Activated naive CD4-positive, alpha-beta T cell treated with anti-CD3 and anti-CD28 coated beads, Interleukin-2, amount 10 ng/mL, durations not matched to agents 7 days and 5 days (primary cell): ENCODE measurements at regions of chr9 and their contacts with region 1.

Region 1: DNA sequence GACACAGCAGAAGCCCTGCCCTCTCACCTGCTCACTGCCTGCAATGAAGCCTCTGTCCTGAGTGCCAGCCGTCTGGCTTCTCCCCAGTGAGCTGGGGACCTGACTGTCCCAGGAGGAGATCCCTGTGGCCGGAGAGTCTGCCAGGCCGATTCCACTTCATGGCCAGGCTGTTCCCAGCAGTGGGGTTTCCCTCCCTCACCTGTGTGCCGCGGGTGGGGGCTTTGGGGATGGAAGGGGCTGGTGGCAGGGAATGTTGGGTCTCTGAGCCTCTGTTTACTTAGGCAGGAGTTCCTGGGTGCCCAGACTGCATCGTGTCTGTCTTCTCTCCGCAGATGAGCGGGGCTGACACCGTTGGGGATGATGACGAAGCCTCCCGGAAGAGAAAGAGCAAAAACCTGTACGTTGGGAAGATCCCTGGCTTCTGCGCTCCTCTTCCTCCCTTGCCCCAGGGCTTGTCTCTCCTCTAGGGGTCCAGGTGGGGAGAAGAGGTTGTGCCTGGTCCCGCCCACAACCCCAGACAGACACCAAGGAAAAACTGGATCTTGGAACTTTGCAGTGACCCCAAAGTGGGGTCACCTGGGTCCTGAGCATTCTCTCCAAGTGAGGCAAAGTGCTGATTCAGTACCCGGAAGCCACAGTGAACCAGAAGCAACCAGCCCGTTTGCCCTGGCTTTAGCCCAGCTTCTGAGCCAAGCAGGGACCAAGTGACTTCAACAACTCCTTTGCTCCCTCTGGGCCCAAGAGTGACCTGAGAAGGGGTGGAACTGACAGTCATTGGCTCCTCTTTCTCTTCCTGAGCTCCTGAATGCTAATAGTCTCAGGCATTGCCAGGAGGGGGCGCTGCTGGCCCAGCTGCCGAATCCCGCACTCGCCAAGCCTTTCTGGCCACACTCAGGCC is 127.7 kb downstream of the RGS3 start:
- DNase-seq: peak; percentile 68
- H3K4me3 Mint-ChIP-seq: no peak overlapping the region
- H3K27ac Mint-ChIP-seq: no peak overlapping the region
- H3K4me1 Mint-ChIP-seq: peaks cover 50% of the 10 kb centered on the region
- H3K27me3 Mint-ChIP-seq: no peaks in the 10 kb centered on the region

Region 2: GRCh38 chr9:113446323-113446740 is 144.9 kb before region 1 on chr9:
- CTCF ChIA-PET with region 1: interaction called, 162 read pairs
- DNase-seq: peak; percentile 27
- H3K4me3 Mint-ChIP-seq: no peak overlapping the region
- H3K27ac Mint-ChIP-seq: no peak overlapping the region
- H3K4me1 Mint-ChIP-seq: peaks cover 3% of the 10 kb centered on the region
- H3K27me3 Mint-ChIP-seq: no peaks in the 10 kb centered on the region

Region 3: DNA sequence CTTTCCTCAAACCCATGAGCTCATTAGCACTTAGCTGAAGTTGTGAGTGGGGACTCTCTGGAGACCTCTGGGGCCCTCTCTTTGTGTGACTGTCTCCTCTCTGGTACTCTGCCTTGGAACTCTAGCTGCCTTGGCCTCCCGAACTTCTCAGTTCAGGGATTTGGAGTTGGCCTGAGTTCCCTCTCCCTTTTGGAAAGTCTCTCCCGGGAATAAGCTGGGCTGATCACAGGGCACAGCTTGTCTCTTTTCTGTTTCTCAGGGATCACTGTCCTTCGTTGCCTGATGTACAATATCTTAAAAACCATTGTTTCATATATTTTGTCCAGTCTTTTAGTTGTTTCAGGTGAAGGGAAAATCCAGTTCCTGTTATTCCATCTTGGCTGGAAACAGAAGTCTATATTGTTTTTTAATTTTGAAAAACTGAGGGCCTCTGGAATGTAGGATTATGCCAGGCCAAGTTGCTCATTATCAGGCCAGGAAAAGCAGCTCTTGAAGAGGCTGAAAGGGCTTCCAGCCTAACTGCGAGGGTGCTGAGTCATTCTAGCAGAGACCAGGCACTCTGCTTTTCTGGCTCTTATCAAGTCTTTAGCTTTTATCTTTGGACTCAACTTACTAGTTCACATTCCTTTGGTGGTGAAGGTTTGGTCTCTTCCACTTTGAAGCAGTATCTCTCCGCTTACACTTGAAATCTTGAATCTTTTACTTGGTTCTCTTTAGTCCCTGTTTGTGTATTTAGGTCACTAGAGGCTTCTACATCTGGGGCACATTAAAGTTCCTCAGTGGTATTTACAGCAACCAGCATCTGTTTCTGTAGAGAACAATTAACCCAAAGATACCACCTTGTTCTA is 136.1 kb before region 1 on chr9:
- CTCF ChIA-PET with region 1: interaction called, 162 read pairs
- DNase-seq: no peak
- H3K4me3 Mint-ChIP-seq: no peak overlapping the region
- H3K27ac Mint-ChIP-seq: no peak overlapping the region
- H3K4me1 Mint-ChIP-seq: peaks cover 8% of the 10 kb centered on the region
- H3K27me3 Mint-ChIP-seq: no peaks in the 10 kb centered on the region

Region 4: GRCh38 chr9:113602126-113603044 is 11.1 kb after region 1 on chr9:
- CTCF ChIA-PET with region 1: interaction called, 71 read pairs
- DNase-seq: peak; percentile 33
- H3K4me3 Mint-ChIP-seq: no peak overlapping the region
- H3K27ac Mint-ChIP-seq: no peak overlapping the region
- H3K4me1 Mint-ChIP-seq: no peaks in the 10 kb centered on the region
- H3K27me3 Mint-ChIP-seq: no peaks in the 10 kb centered on the region

Region 5: GRCh38 chr9:113622600-113623400 is 31.6 kb after region 1 on chr9:
- CTCF ChIA-PET with region 1: interaction called, 15 read pairs
- DNase-seq: no peak
- H3K4me3 Mint-ChIP-seq: no peak overlapping the region
- H3K27ac Mint-ChIP-seq: no peak overlapping the region
- H3K4me1 Mint-ChIP-seq: peaks cover 3% of the 10 kb centered on the region
- H3K27me3 Mint-ChIP-seq: peaks cover 20% of the 10 kb centered on the region

Region 6: GRCh38 chr9:113772121-113772810 is 181.0 kb after region 1 on chr9:
- CTCF ChIA-PET with region 1: no interaction called
- DNase-seq: no peak
- H3K4me3 Mint-ChIP-seq: no peak overlapping the region
- H3K27ac Mint-ChIP-seq: no peak overlapping the region
- H3K4me1 Mint-ChIP-seq: no peaks in the 10 kb centered on the region
- H3K27me3 Mint-ChIP-seq: peaks cover 6% of the 10 kb centered on the region

Region 7: GRCh38 chr9:113853324-113853723 is 262.1 kb after region 1 on chr9:
- CTCF ChIA-PET with region 1: no interaction called
- DNase-seq: no peak
- H3K4me3 Mint-ChIP-seq: no peak overlapping the region
- H3K27ac Mint-ChIP-seq: no peak overlapping the region
- H3K4me1 Mint-ChIP-seq: no peaks in the 10 kb centered on the region
- H3K27me3 Mint-ChIP-seq: peaks cover 12% of the 10 kb centered on the region